PC-9 (cell line): ENCODE measurements at regions of chr6 and their contacts with region 1.

Region 1: DNA sequence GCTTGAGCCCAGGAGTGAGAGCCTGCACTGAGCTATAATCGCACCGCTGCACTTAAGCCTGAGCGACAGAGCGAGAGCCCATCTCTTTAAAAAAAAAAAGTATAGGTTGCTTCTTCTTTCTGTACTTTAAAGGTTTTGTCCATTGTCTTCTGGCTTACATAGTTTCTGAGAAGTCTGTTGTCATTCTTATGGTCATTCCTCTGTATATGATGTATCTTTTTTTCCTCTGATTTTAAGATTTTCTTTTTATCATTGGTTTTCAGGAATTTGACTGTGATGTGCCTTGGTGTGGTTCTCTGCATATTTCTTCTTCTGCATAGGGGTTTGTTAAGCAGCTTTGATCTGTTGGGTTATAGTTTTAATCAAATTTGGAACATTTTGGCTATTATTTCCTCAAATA is 29.1 kb downstream of the QRSL1 start:
- DNase-seq: no peak
- H3K4me3 ChIP-seq: no peak overlapping the region
- H3K27ac ChIP-seq: no peak overlapping the region
- H3K4me1 ChIP-seq: peaks cover 6% of the 10 kb centered on the region; the same call in 1 of the 2 replicates
- H3K27me3 ChIP-seq: no peaks in the 10 kb centered on the region
- CTCF ChIP-seq: no peak

Region 2: GRCh38 chr6:106539936-106540335 is 118.5 kb before region 1 on chr6:
- CTCF ChIA-PET with region 1: no interaction called
- POLR2A ChIA-PET with region 1: no interaction called
- intact Hi-C with region 1: no loop called
- DNase-seq: no peak
- H3K4me3 ChIP-seq: no peak overlapping the region
- H3K27ac ChIP-seq: peak overlapping the region; percentile 27
- H3K4me1 ChIP-seq: peaks cover 15% of the 10 kb centered on the region
- H3K27me3 ChIP-seq: no peaks in the 10 kb centered on the region
- CTCF ChIP-seq: no peak

Region 3: DNA sequence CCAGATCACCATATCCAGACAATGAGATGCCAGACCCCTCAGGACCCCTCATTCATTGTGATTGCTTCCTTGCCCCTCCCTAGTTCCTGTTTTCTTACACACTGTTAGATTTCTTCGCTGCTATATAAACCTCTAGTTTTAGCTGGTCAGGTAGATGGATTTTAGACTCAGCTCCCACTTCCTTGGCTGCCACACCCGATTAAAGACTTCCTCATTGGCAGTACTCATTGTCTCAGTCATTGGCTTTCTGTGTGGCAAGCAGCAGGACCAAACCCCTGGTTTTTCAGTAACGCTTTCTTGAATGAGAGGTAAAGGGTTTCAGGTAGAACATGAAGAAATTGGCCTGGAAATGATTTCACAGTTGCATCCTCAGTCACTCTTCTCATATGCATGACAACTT is 18.8 kb after region 1 on chr6:
- CTCF ChIA-PET with region 1: interaction called, 11 read pairs
- POLR2A ChIA-PET with region 1: no interaction called
- intact Hi-C with region 1: no loop called
- DNase-seq: no peak
- H3K4me3 ChIP-seq: no peak overlapping the region
- H3K27ac ChIP-seq: no peak overlapping the region
- H3K4me1 ChIP-seq: no peaks in the 10 kb centered on the region
- H3K27me3 ChIP-seq: no peaks in the 10 kb centered on the region
- CTCF ChIP-seq: no peak

Region 4: DNA sequence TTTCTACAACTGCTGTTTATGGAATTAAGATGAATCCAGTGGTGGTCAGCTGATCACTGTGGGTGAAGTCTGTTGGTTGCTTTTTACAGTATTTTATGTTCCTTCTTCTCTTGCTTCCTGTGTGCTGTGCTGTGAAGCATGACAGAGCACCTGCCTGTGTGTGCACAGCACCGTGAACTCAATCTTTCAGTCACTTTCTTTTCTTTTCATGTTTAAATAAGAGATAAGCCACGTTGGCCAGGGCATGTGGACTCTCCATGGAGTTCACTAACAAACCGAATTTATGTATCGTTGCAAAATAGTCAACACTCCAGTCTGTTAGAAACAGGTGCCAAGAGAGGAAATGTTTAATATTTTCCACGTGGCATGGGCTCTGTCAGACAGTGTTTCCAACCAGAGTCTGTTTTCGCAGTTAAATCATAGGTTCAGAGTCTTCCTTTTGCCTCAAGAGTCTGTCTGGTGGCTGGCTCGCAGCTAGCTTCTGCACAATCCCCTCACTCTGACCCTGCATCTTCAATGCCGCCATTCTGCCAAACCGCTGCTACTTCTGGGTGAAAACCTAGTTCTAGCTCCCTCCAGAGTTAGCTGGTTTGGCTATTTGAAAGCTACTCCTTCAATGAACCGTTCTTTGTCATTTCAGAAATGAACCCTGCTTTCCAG is 44.1 kb after region 1 on chr6:
- CTCF ChIA-PET with region 1: no interaction called
- POLR2A ChIA-PET with region 1: no interaction called
- intact Hi-C with region 1: no loop called
- DNase-seq: no peak
- H3K4me3 ChIP-seq: no peak overlapping the region
- H3K27ac ChIP-seq: no peak overlapping the region
- H3K4me1 ChIP-seq: no peaks in the 10 kb centered on the region
- H3K27me3 ChIP-seq: no peaks in the 10 kb centered on the region
- CTCF ChIP-seq: no peak